ENCODE measurements at regions of chr18 and their contacts with region 1.

Region 1: DNA sequence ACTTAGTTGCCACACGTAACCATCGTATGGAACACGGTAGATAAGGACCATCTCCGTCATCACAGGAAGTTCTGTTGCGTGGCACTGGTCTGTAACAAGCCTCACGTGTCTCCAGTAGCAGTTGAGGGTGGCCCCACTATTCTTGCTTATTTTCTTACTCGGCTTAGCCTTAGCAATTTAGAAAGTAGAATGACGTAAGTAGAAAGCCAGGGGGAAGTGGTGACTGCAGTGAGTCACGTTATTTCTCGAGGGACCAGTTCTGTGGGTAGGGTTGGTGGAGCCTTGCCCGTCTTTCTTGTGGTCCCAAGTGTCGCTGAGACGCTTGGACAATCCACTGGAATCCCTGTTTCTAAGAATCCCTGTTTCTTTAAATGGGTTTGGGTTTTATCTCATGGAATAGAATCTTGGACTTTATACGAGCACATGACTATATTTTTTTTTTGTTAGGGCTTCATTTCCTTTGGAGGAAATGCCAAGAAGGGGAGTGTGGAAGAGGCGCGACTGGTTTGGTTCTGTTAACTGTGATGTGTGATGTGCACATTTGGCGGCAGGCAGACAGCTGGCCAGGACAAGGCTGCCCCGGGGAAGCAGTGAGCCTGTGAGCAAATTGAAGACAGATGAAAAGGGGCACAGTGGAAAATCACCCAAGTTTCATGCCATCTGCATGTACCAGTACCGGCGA is 96.2 kb downstream of the CABLES1 start:
- DNase-seq: peak; percentile 99
- ATAC-seq: peak; percentile 81
- H3K4me3 ChIP-seq: no peak overlapping the region
- H3K27ac ChIP-seq: peak overlapping the region; percentile 95
- H3K4me1 ChIP-seq: peaks cover 55% of the 10 kb centered on the region
- H3K27me3 ChIP-seq: no peaks in the 10 kb centered on the region
- CTCF ChIP-seq: no peak
- EP300 ChIP-seq: peak; percentile 100
- POLR2A ChIP-seq: peak; percentile 51
- RAD21 ChIP-seq: no peak; the same call in 1 of the 2 replicates

Region 2: GRCh38 chr18:23207191-23207955 is 24.1 kb before region 1 on chr18:
- CTCF ChIA-PET with region 1: interaction called, 58 read pairs
- POLR2A ChIA-PET with region 1: interaction called, 3 read pairs
- RAD21 ChIA-PET with region 1: interaction called, 4 read pairs
- SMC1A ChIA-PET with region 1: no interaction called
- in situ Hi-C with region 1: no loop called
- intact Hi-C with region 1: no loop called
- DNase-seq: no peak
- ATAC-seq: peak; percentile 69
- H3K4me3 ChIP-seq: no peak overlapping the region
- H3K27ac ChIP-seq: no peak overlapping the region
- H3K4me1 ChIP-seq: no peaks in the 10 kb centered on the region
- H3K27me3 ChIP-seq: no peaks in the 10 kb centered on the region
- CTCF ChIP-seq: peak in 2 of 3 experiments; percentile 55 to 59; a peak in 4 of 6 replicates
- EP300 ChIP-seq: no peak
- POLR2A ChIP-seq: no peak
- RAD21 ChIP-seq: no peak

Region 3: DNA sequence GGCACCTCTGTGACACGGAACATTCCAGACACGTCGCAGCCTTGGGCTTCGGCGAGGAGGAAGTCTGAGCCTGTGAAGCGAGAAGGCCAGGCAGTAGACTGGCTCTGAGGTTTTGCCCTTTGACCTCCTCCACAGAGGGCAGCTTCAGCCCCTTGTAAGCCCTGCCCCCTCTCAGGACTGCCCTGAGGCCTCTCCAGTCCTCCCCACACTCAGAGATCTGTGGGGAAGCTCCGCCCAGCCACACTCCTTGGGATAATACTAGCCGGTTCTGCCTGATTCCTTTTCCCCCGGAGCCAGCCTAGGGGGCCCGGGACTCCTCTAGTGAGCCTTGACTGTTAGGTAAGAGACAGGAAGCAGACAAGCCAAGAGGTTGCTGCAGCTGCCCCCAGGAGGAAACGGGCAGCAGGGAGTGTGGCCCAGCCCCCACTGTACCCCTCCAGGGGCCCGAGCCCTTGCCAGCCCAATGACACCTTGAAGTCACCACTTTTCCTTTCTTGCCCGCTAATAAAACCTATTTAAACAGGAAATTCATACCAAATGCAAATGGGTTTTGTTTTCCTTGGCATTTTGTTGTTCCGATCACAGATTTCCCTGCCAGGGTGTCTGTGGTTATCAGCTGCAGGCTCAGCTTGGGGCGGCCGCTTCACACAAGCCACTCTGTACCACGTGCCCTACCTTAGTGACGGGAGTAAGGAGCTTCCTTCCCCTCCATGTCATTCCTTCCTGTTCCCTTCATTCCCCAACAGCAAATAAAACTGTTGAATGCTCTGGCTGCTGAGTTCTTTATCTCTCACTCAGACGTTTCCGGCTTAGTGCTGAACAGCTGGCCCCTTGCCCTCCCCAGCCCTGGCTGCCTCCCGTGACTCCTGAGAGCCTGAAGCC is 28.5 kb after region 1 on chr18:
- CTCF ChIA-PET with region 1: interaction called, 11 read pairs
- POLR2A ChIA-PET with region 1: no interaction called
- RAD21 ChIA-PET with region 1: interaction called, 10 read pairs
- SMC1A ChIA-PET with region 1: interaction called, 9 read pairs
- in situ Hi-C with region 1: no loop called
- intact Hi-C with region 1: no loop called
- DNase-seq: no peak
- ATAC-seq: peak; percentile 82
- H3K4me3 ChIP-seq: peak overlapping the region; percentile 28; the same call in 1 of the 2 replicates
- H3K27ac ChIP-seq: peak overlapping the region; percentile 77
- H3K4me1 ChIP-seq: peaks cover 22% of the 10 kb centered on the region
- H3K27me3 ChIP-seq: no peaks in the 10 kb centered on the region
- CTCF ChIP-seq: no peak
- EP300 ChIP-seq: peak in 1 of 2 experiments; percentile 50; a peak in 1 of 4 replicates
- POLR2A ChIP-seq: no peak; the same call in none of the 2 replicates
- RAD21 ChIP-seq: no peak

Region 4: GRCh38 chr18:23422672-23423418 is 191.4 kb after region 1 on chr18:
- CTCF ChIA-PET with region 1: no interaction called
- POLR2A ChIA-PET with region 1: interaction called, 5 read pairs
- RAD21 ChIA-PET with region 1: interaction called, 4 read pairs
- SMC1A ChIA-PET with region 1: no interaction called
- in situ Hi-C with region 1: no loop called
- intact Hi-C with region 1: loop called (anchors 1 kb)
- DNase-seq: peak; percentile 92
- ATAC-seq: peak; percentile 96
- H3K4me3 ChIP-seq: peak overlapping the region; percentile 55; the same call in 1 of the 2 replicates
- H3K27ac ChIP-seq: peak overlapping the region; percentile 62
- H3K4me1 ChIP-seq: peaks cover 24% of the 10 kb centered on the region
- H3K27me3 ChIP-seq: no peaks in the 10 kb centered on the region
- CTCF ChIP-seq: peak in 2 of 3 experiments; percentile 26 to 27; a peak in 2 of 6 replicates
- EP300 ChIP-seq: peak; percentile 85 to 95
- POLR2A ChIP-seq: no peak
- RAD21 ChIP-seq: 0 out of 2 replicates have a peak, but pooled peaks have one; percentile 24

Region 5: GRCh38 chr18:23515911-23516546 is 284.5 kb after region 1 on chr18:
- CTCF ChIA-PET with region 1: no interaction called
- POLR2A ChIA-PET with region 1: no interaction called
- RAD21 ChIA-PET with region 1: no interaction called
- SMC1A ChIA-PET with region 1: no interaction called
- in situ Hi-C with region 1: no loop called
- intact Hi-C with region 1: no loop called
- DNase-seq: peak; percentile 39
- ATAC-seq: peak; percentile 99
- H3K4me3 ChIP-seq: no peak overlapping the region
- H3K27ac ChIP-seq: no peak overlapping the region
- H3K4me1 ChIP-seq: peaks cover 3% of the 10 kb centered on the region; the same call in 1 of the 2 replicates
- H3K27me3 ChIP-seq: no peaks in the 10 kb centered on the region
- CTCF ChIP-seq: peak; percentile 89 to 97 (median 94)
- EP300 ChIP-seq: no peak
- POLR2A ChIP-seq: no peak
- RAD21 ChIP-seq: peak; percentile 76